ENCODE measurements at regions of chr2 and their contacts with region 1.

Region 1: GRCh38 chr2:42086500-42086953 is 38.7 kb downstream of the PKDCC start:
- DNase-seq: peak in 2 of 3 donors; percentile 37 to 41
- H3K4me3 ChIP-seq: no peak overlapping the region
- H3K4me3 Mint-ChIP-seq: no peak overlapping the region
- H3K27ac ChIP-seq: no peak overlapping the region
- H3K27ac Mint-ChIP-seq: peak overlapping the region in 1 of 7 donors; percentile 26
- H3K4me1 ChIP-seq: no peaks in the 10 kb centered on the region
- H3K4me1 Mint-ChIP-seq: peaks cover 3% of the 10 kb centered on the region
- H3K27me3 ChIP-seq: no peaks in the 10 kb centered on the region
- H3K27me3 Mint-ChIP-seq: peaks cover 0 to 16% (median 7%) of the 10 kb centered on the region in 3 donors
- CTCF ChIP-seq: peak; percentile 85

Region 2: DNA sequence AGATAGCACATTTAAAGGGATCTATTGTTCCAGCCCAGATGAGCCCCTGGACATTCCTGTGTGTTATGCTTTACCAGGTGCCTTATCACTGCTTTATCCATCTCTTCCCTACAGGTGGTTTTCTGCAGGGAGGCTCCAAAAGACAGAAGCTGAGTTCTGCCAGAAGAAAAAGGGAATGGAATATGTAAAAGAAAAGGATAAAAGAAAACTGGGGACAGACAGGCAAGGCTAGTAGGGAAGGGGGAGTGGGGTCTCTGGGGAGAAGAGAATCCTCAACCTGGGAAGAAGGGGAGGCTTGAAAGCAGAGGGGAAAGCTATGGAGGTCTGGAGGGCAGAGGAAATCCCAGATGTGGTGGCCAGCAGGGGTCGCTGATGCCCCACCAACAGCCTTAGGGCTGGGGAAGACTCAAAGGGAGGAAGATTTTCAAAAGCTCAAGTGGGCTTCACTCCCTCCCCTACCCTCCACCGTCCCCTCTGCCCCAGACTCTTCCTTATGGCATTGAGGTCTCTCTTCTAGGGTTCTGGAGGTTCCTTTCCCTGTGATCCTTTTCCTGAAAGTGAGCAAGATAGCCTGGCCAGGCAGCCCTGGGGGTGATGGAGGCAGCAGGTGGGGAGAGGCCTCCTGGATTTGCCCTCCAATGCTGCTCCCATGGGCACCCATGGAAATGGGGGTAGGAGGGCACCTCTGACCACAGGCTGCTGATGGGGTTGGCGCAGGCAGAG is 216.8 kb before region 1 on chr2:
- intact Hi-C with region 1: loop called (anchors 1 to 2 kb)
- DNase-seq: peak; percentile 33 to 54 (median 35)
- H3K4me3 ChIP-seq: no peak overlapping the region
- H3K4me3 Mint-ChIP-seq: no peak overlapping the region
- H3K27ac ChIP-seq: no peak overlapping the region
- H3K27ac Mint-ChIP-seq: peak overlapping the region in 1 of 7 donors; percentile 42
- H3K4me1 ChIP-seq: no peaks in the 10 kb centered on the region
- H3K4me1 Mint-ChIP-seq: peaks cover 2% of the 10 kb centered on the region
- H3K27me3 ChIP-seq: peaks cover 0 to 2% of the 10 kb centered on the region in 2 donors
- H3K27me3 Mint-ChIP-seq: peaks cover 1 to 9% (median 3%) of the 10 kb centered on the region in 3 donors
- CTCF ChIP-seq: peak; percentile 78

Region 3: GRCh38 chr2:41896186-41896846 is 190.2 kb before region 1 on chr2:
- intact Hi-C with region 1: no loop called
- DNase-seq: no peak
- H3K4me3 ChIP-seq: no peak overlapping the region
- H3K4me3 Mint-ChIP-seq: no peak overlapping the region
- H3K27ac ChIP-seq: no peak overlapping the region
- H3K27ac Mint-ChIP-seq: no peak overlapping the region
- H3K4me1 ChIP-seq: no peaks in the 10 kb centered on the region
- H3K4me1 Mint-ChIP-seq: no peaks in the 10 kb centered on the region
- H3K27me3 ChIP-seq: no peaks in the 10 kb centered on the region
- H3K27me3 Mint-ChIP-seq: peaks cover under 1 to 4% (median 3%) of the 10 kb centered on the region in 3 donors
- CTCF ChIP-seq: no peak

Measured in CD14-positive monocyte (primary cell).